Activated CD4-positive, alpha-beta T cell treated with anti-CD3 and anti-CD28 coated beads for 36 hours (primary cell): ENCODE measurements at regions of chr10 and their contacts with region 1.

Region 1: GRCh38 chr10:73785221-73785720 is at the start of gene ZSWIM8:
- DNase-seq: peak; percentile 90
- ATAC-seq: peak; percentile 85
- H3K4me3 Mint-ChIP-seq: peak within 1 kb of the TSS; percentile 83
- H3K27ac Mint-ChIP-seq: peak within 1 kb of the TSS; percentile 98
- H3K4me1 Mint-ChIP-seq: peaks cover 46% of the 10 kb centered on the region
- H3K27me3 Mint-ChIP-seq: no peaks in the 10 kb centered on the region
- total RNA-seq, gene ZSWIM8: 40.1 to 67.3 TPM

Region 2: DNA sequence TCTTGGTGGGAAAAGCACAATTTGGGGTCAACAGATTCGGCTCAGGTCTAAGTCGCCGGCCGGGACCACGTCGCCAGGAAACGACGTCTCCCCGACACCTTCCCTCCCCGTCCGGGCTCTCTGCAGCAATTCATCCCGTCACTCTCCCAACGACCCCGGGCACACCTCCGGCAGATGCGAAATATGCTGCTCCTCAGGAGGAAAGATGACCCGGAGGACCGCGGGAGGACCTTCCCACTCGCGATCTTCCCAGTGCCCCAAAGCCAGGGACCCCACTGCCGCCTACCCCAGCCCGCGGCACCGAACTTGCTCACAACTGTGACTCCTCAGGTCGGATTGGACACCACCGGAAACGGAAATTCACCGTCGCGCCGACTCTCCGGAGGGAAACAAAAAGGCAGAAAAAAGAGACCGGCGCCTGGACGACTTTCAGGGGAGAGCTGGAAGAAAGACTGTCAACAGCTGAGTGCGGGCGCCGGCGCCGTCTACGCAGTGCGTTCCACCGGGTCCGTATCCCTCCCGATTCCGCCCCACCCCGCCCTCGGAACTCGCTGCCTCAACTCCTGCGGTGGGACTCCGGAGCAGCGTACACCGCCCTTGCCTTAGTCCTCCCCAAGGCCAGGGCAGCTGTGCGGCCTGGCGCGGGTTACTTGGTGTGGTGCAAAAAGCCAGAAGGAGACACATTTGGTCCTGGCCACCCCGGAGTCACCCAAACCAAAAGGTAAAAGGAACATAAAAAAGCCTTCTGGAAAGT is 54.9 kb before region 1 on chr10:
- CTCF ChIA-PET with region 1: interaction called, 6 read pairs
- POLR2A ChIA-PET with region 1: interaction called, 3 read pairs
- intact Hi-C with region 1: loop called in 1 of 2 experiments (anchors 1 kb)
- DNase-seq: peak; percentile 95
- ATAC-seq: peak; percentile 93
- H3K4me3 Mint-ChIP-seq: peak overlapping the region; percentile 98
- H3K27ac Mint-ChIP-seq: peak overlapping the region; percentile 97
- H3K4me1 Mint-ChIP-seq: peaks cover 9% of the 10 kb centered on the region
- H3K27me3 Mint-ChIP-seq: no peaks in the 10 kb centered on the region

Region 3: GRCh38 chr10:73772280-73773151 is 12.8 kb before region 1 on chr10:
- CTCF ChIA-PET with region 1: interaction called, 22 read pairs
- POLR2A ChIA-PET with region 1: interaction called, 4 read pairs
- intact Hi-C with region 1: loop called (anchors 1 kb)
- DNase-seq: peak; percentile 89
- ATAC-seq: peak; percentile 75
- H3K4me3 Mint-ChIP-seq: peak overlapping the region; percentile 86
- H3K27ac Mint-ChIP-seq: peak overlapping the region; percentile 91
- H3K4me1 Mint-ChIP-seq: peaks cover 53% of the 10 kb centered on the region
- H3K27me3 Mint-ChIP-seq: no peaks in the 10 kb centered on the region

Region 4: GRCh38 chr10:73874267-73875138 is 89.2 kb after region 1 on chr10 and contains the start of gene CAMK2G:
- CTCF ChIA-PET with region 1: interaction called, 5 read pairs
- POLR2A ChIA-PET with region 1: no interaction called
- intact Hi-C with region 1: loop called in 1 of 2 experiments (anchors 1 kb)
- DNase-seq: peak; percentile 92
- ATAC-seq: peak; percentile 87
- H3K4me3 Mint-ChIP-seq: peak within 1 kb of the TSS; percentile 74
- H3K27ac Mint-ChIP-seq: peak within 1 kb of the TSS; percentile 81
- H3K4me1 Mint-ChIP-seq: peaks cover 67% of the 10 kb centered on the region
- H3K27me3 Mint-ChIP-seq: no peaks in the 10 kb centered on the region
- total RNA-seq, gene CAMK2G: 16.4 to 19.4 TPM